Heart right ventricle (tissue), 16 donors: ENCODE measurements at regions of chr2 and their contacts with region 1.

Region 1: GRCh38 chr2:119011162-119011909 is 69.3 kb downstream of the MARCO start:
- DNase-seq: peak; percentile 22 to 65
- ATAC-seq: peak; percentile 79 to 95 (median 92)
- H3K4me3 ChIP-seq: peak overlapping the region in 2 of 10 donors; percentile 15 to 20
- H3K27ac ChIP-seq: no peak overlapping the region
- H3K4me1 ChIP-seq: peaks cover 0 to 7% (median 0%) of the 10 kb centered on the region in 9 donors
- H3K27me3 ChIP-seq: peaks cover 0 to 48% (median 34%) of the 10 kb centered on the region in 7 donors
- CTCF ChIP-seq: peak; percentile 21 to 77 (median 65)

Region 2: DNA sequence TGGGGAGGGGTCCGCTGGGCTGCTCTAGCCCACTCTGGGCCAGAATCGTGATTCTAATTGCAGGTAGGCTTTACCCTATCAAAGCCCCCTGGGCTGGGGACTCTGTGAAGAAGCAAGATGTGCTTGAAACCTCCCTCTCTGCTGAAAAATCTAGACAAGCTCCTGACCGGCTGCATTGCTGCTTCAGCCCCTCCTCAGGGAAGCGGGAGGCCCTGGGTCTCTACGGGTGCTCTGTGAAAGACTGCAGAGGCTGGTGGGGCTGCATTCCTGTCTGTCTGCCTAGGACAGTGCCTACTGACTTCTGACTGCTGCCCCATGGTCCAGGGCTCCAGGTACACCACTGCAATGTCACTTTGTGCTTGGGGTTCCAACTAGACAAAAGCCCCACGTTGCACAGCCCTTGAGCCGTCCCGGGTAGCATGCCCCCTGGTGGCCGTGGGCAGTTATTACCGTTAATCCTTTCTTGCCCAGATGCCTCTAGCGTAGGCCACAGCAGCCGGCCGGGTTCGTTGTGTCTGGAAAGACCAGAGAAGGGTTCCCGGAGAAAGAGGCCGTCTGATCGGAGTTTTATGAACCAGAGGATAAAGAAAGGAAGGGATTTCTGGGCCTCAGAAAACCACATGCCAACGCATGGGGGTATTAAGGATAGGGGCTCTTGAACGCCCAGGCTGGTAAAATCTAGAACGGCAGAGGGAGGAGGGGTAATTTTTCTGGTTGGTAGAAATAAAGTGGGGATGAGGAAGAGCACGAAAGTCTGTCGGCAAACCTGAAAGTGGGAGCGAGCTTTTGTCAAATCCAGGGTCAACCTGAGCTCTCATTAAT is 163.1 kb after region 1 on chr2:
- intact Hi-C with region 1: loop called in 1 of 10 experiments (anchors 5 kb)
- DNase-seq: peak in 1 of 2 donors; percentile 37
- ATAC-seq: peak in 6 of 8 donors; percentile 33 to 56 (median 44)
- H3K4me3 ChIP-seq: no peak overlapping the region
- H3K27ac ChIP-seq: no peak overlapping the region
- H3K4me1 ChIP-seq: no peaks in the 10 kb centered on the region
- H3K27me3 ChIP-seq: peaks cover 0 to 9% (median 0%) of the 10 kb centered on the region in 7 donors
- CTCF ChIP-seq: peak; percentile 25 to 83 (median 63)

Region 3: DNA sequence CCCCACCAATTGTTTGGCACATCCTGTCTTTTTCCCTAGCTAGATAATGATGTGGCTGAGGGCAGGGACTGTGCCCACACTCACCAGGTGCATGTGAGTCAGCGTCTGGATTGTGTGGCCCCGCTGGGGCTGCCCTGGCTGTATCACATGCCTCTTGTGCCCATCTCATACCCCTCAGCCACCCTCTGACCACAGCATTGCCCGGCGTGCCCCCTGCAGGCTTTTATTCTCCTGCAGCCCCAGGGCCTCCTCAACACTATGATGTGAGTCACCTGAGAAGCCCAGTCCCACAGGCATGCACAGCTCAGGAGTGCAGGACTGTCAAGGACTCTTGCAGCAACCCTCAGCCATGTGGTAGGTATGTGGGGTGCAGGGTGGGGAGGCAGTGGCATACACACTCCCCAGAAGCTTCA is 197.5 kb after region 1 on chr2:
- intact Hi-C with region 1: no loop called
- DNase-seq: no peak
- ATAC-seq: no peak
- H3K4me3 ChIP-seq: no peak overlapping the region
- H3K27ac ChIP-seq: no peak overlapping the region
- H3K4me1 ChIP-seq: no peaks in the 10 kb centered on the region
- H3K27me3 ChIP-seq: peaks cover 0 to 9% (median 0%) of the 10 kb centered on the region in 7 donors
- CTCF ChIP-seq: no peak

Region 4: DNA sequence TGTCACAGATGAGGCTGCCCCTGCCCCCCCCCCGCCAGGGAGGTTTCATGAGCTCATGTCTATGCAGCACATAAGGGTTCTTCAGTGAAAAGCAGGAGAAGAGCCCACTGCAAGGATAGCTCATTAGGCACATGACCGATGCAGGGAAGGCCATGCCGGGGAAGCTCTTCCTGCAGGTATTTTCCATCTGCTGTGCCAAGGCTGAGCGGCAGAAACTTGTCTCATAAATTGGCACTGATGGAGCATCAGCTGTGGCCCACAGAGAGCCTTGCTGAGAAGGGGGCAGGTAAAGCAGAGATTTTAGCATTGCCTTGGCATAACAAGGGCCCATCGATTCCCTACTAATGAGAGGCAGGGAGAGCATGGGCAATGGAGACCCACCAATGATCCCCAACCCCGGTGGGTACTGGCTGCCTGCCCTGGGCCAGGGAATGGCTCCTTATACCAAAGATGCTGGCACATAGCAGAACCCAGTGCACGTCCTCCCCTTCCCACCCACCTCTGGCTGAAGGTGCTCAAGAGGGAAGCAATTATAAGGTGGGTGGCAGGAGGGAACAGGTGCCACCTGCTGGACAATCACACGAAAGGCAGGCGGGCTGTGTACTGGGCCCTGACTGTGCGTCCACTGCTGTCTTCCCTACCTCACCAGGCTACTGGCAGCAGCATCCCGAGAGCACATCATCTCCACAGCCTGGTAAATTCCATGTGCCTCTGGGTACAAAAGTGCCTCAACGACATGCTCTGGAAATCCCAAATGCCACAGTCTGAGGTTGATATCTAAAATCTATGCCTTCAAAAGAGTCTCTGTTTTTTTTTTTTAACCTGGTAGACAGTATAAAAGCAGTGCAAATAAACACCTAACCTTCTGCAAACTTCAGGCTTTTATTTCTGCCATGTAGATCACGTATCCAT is 253.7 kb after region 1 on chr2:
- intact Hi-C with region 1: loop called in 1 of 10 experiments (anchors 5 kb)
- DNase-seq: peak in 1 of 2 donors; percentile 23
- ATAC-seq: peak; percentile 71 to 89 (median 83)
- H3K4me3 ChIP-seq: no peak overlapping the region
- H3K27ac ChIP-seq: no peak overlapping the region
- H3K4me1 ChIP-seq: peaks cover 0 to 13% (median 0%) of the 10 kb centered on the region in 9 donors
- H3K27me3 ChIP-seq: no peaks in the 10 kb centered on the region
- CTCF ChIP-seq: peak; percentile 33 to 76 (median 72)

Region 5: GRCh38 chr2:119283860-119284331 is 272.6 kb after region 1 on chr2:
- intact Hi-C with region 1: loop called in 3 of 10 experiments (anchors 2 to 10 kb)
- DNase-seq: peak; percentile 46 to 60
- ATAC-seq: peak; percentile 77 to 91 (median 84)
- H3K4me3 ChIP-seq: no peak overlapping the region
- H3K27ac ChIP-seq: peak overlapping the region in 6 of 10 donors; percentile 9 to 80 (median 23)
- H3K4me1 ChIP-seq: peaks cover 0 to 28% (median 3%) of the 10 kb centered on the region in 9 donors
- H3K27me3 ChIP-seq: no peaks in the 10 kb centered on the region
- CTCF ChIP-seq: no peak

Region 6: DNA sequence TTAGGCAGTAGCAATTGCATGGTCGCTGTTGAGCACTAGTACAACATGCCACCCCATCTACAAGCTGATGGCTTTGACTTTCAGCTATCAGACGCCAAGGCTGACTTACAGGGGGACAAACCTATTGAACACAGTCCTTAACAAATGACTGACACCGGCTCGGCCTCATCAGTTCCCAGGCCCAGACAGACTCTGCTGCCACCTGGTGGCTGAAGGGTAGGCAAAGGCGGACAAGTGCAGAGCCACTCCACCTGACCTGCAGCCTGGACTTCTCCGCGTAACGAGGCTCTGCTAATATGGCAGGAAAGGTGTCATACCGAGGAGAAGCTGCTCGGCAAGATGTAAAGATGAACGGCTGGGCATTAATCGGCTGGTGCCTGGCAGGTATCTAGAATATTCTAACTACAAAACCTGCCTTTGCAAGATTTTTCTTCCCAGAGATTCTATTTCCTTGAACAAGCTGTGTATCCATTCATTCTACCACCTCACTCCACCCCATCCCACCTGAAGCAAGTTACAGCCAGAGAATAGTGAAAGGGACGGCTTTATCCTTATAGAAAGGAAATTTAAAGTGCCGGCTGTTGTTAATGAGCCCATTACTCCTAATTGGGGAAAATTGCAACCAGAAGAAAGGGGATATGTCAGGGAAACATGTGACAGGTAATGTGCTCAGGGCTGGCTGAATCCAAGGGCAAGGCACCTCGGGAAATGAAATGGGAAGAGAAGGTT is 279.7 kb after region 1 on chr2:
- intact Hi-C with region 1: loop called (anchors 2 to 10 kb)
- DNase-seq: peak; percentile 78 to 86
- ATAC-seq: peak; percentile 60 to 90 (median 86)
- H3K4me3 ChIP-seq: no peak overlapping the region
- H3K27ac ChIP-seq: no peak overlapping the region
- H3K4me1 ChIP-seq: peaks cover 0 to 18% (median 3%) of the 10 kb centered on the region in 9 donors
- H3K27me3 ChIP-seq: no peaks in the 10 kb centered on the region
- CTCF ChIP-seq: peak; percentile 19 to 99 (median 91)

Region 7: GRCh38 chr2:119352357-119352756 is 341.0 kb after region 1 on chr2:
- intact Hi-C with region 1: no loop called
- DNase-seq: peak in 1 of 2 donors; percentile 55
- ATAC-seq: peak; percentile 63 to 90 (median 79)
- H3K4me3 ChIP-seq: no peak overlapping the region
- H3K27ac ChIP-seq: peak overlapping the region in 7 of 10 donors; percentile 45 to 82 (median 71)
- H3K4me1 ChIP-seq: peaks cover 0 to 63% (median 25%) of the 10 kb centered on the region in 9 donors
- H3K27me3 ChIP-seq: no peaks in the 10 kb centered on the region
- CTCF ChIP-seq: no peak

Region 8: DNA sequence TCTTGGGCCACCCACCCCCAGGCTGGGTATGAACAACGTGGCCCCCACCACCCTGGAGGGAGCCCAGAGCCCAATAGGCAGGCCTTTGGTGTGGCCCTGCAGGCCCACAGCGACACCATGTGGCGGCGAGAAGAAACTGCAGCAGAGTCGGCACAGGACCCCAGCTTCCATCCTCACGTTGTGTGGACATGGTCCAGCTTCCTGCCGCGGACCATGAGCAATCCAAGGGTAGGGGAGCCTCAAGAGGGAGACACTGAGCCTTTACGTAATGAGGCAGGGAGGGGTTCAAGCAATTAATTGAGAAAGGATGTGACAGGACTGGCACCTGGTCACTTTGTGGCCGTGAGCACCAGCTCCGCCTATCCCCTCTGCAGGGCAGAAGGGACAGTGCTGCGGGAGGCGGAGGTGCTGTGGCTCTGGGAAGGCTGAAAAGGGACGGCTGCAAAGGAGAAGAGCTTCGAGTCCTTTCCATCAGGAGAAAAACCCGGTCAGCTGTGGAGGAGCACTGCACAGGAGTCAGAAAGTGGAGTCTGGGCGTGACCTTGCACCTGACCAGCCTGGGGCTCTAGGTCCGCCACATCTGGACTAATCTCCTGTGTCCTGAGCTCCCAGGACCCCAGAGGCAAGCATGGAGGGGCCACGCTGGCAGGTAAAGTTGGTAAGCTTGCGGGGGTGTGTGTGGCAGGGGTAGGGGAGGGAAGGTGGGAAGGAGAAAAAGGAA is 465.1 kb after region 1 on chr2:
- intact Hi-C with region 1: loop called in 6 of 10 experiments (anchors 5 to 10 kb)
- DNase-seq: peak in 1 of 2 donors; percentile 52
- ATAC-seq: peak; percentile 57 to 78 (median 72)
- H3K4me3 ChIP-seq: peak overlapping the region in 2 of 10 donors; percentile 20
- H3K27ac ChIP-seq: peak overlapping the region in 5 of 10 donors; percentile 28 to 73 (median 44)
- H3K4me1 ChIP-seq: peaks cover 0 to 39% (median 18%) of the 10 kb centered on the region in 9 donors
- H3K27me3 ChIP-seq: peaks cover 0 to 6% (median 0%) of the 10 kb centered on the region in 7 donors
- CTCF ChIP-seq: peak; percentile 89 to 98 (median 96)